ENCODE measurements at regions of chr6 and their contacts with region 1.

Region 1: DNA sequence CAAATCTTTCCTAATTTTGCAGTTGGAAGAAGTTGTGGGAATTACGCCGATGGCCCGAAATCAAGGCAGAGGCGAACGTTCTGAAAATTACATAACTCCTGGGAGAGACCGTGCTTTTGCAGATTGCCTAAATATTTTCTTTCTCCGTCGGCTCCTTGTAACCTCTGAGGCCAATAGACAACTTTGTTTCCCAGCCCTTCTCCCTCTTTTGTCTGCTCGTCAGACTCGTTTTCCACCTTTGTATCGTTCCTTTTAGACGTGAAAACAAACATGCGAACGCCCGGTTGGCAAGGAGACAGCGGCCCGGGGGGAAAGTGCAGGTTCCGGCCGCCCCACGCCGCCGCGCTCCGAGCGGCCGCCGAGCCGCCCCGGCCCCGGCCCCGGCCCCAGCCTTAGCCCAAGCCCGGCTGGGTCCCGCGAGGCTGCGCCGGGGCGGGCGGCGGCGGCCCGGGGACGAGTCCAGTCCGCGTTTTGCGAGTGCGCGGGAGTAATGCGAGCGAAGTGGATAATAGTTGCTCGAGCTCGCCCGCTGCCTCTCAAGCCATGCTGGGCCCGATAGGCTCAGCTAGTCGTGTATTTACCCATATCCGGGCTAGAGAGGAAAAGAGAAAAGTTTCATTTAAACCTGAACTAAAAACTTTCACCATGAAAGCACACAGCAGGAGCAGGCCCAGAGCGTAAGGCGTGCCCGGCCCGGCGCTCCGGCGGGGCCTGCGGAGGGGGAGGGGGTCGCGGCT is at the start of gene ARID1B:
- DNase-seq: peak; percentile 67 to 86 (median 80)
- ATAC-seq: peak; percentile 74
- H3K4me3 ChIP-seq: peak within 1 kb of the TSS; percentile 79
- H3K4me3 Mint-ChIP-seq: peak within 1 kb of the TSS; percentile 87 to 100 (median 96)
- H3K27ac ChIP-seq: peak within 1 kb of the TSS; percentile 81
- H3K27ac Mint-ChIP-seq: peak within 1 kb of the TSS; percentile 94 to 99 (median 99)
- H3K4me1 ChIP-seq: peaks cover 4 to 10% of the 10 kb centered on the region in 2 donors
- H3K4me1 Mint-ChIP-seq: peaks cover 11 to 44% (median 38%) of the 10 kb centered on the region in 7 donors
- H3K27me3 ChIP-seq: no peaks in the 10 kb centered on the region
- H3K27me3 Mint-ChIP-seq: peaks cover 0 to 4% (median 0%) of the 10 kb centered on the region in 5 donors
- total RNA-seq, gene ARID1B: 88.8 to 164 (median 141) TPM

Region 2: DNA sequence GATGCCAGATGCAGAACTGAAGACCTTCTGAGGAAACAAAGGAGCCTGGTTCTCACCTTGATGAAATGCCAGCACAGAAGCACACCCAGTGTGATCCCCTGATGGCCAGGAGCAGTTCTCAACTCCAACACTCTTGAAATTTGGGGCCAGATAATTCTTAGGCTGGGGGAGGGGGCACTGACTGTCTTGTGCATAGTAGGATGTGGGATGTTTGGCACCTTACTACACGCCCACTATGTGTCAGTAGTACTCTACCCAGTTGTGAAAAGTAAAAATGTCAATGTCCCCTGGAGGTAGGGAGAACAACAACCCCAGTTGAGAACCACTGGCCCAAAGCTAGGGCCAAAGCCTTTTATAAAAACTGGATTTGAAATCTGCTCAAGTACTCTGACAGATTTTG is 398.2 kb before region 1 on chr6:
- CTCF ChIA-PET with region 1: no interaction called
- POLR2A ChIA-PET with region 1: no interaction called
- intact Hi-C with region 1: loop called in 1 of 2 experiments (anchors 5 kb)
- DNase-seq: peak in 6 of 9 donors; percentile 19 to 48 (median 36)
- ATAC-seq: peak; percentile 74
- H3K4me3 ChIP-seq: no peak overlapping the region
- H3K4me3 Mint-ChIP-seq: no peak overlapping the region
- H3K27ac ChIP-seq: no peak overlapping the region
- H3K27ac Mint-ChIP-seq: peak overlapping the region in 6 of 9 donors; percentile 8 to 67 (median 36)
- H3K4me1 ChIP-seq: no peaks in the 10 kb centered on the region
- H3K4me1 Mint-ChIP-seq: peaks cover 0 to 21% (median 0%) of the 10 kb centered on the region in 7 donors
- H3K27me3 ChIP-seq: no peaks in the 10 kb centered on the region
- H3K27me3 Mint-ChIP-seq: peaks cover 0 to 4% (median 0%) of the 10 kb centered on the region in 5 donors

Region 3: GRCh38 chr6:156533872-156534524 is 243.0 kb before region 1 on chr6:
- CTCF ChIA-PET with region 1: no interaction called
- POLR2A ChIA-PET with region 1: no interaction called
- intact Hi-C with region 1: no loop called
- DNase-seq: no peak
- ATAC-seq: no peak
- H3K4me3 ChIP-seq: no peak overlapping the region
- H3K4me3 Mint-ChIP-seq: no peak overlapping the region
- H3K27ac ChIP-seq: no peak overlapping the region
- H3K27ac Mint-ChIP-seq: peak overlapping the region in 1 of 9 donors; percentile 35
- H3K4me1 ChIP-seq: no peaks in the 10 kb centered on the region
- H3K4me1 Mint-ChIP-seq: no peaks in the 10 kb centered on the region
- H3K27me3 ChIP-seq: no peaks in the 10 kb centered on the region
- H3K27me3 Mint-ChIP-seq: no peaks in the 10 kb centered on the region

Region 4: DNA sequence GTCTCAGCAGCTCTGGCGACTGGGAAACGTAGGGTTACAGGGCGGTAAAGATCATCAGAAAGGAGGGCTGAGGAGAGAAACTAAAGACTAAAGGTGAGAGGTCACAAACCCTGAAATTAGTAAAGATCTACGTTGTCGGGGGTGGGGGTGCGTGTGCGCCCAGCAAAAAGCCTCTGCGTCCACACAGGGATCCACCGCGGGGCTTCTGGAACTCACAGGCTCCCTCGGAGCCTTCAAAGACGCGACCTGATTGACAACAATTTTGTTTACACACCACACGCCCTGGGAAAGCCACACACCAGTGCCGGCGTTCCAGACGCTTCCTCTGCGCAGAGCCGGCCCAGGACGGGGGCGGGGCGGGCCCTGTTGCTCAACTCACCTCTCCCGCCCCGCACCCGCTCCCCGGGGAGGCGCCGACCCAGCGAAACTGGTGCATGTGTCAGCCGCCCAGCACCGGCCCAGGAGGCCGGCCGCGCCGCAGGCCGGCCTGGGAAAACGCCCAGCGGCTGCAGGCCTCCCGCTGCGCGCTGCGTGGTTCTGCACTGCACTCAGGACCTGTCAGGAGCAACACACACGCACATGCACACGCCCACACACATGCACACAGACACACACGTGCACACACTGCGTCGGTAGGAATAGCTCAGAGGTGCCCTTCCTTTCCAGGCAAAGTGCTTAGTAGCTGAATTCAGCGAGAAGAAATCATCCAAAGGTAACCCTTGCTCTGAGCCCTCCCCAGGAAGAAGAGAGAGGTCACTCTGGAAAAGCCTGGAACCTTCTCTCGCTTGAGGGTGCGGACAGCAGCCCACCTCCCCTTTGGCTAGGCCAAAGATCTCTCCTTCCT is 57.1 kb before region 1 on chr6:
- CTCF ChIA-PET with region 1: interaction called, 5 read pairs
- POLR2A ChIA-PET with region 1: interaction called, 17 read pairs
- intact Hi-C with region 1: loop called (anchors 1 kb)
- DNase-seq: peak; percentile 56 to 83 (median 76)
- ATAC-seq: peak; percentile 95
- H3K4me3 ChIP-seq: peak overlapping the region; percentile 76
- H3K4me3 Mint-ChIP-seq: peak overlapping the region; percentile 83 to 93 (median 90)
- H3K27ac ChIP-seq: peak overlapping the region; percentile 70
- H3K27ac Mint-ChIP-seq: peak overlapping the region; percentile 38 to 98 (median 93)
- H3K4me1 ChIP-seq: peaks cover 6 to 15% of the 10 kb centered on the region in 2 donors
- H3K4me1 Mint-ChIP-seq: peaks cover 7 to 22% (median 16%) of the 10 kb centered on the region in 7 donors
- H3K27me3 ChIP-seq: no peaks in the 10 kb centered on the region
- H3K27me3 Mint-ChIP-seq: peaks cover 0 to 7% (median 0%) of the 10 kb centered on the region in 5 donors

Region 5: DNA sequence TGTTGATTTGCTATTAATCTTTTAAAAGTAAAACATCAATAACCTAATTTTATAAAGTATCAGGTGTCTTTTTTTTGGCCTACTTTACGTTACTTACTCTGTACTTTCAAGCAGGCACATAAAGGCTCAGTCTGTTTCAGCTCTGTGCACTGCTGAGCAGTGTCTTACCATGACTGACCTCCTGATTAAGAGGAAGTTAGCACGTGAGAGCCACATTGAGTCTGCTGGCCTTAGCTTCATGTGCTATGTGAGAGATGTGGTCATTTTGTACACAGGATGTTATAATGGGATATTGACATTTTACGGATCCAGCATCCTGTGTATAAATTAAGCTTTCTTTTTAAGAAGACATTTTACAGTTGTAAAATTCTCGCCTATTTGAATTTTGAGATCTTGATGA is 32.0 kb after region 1 on chr6:
- CTCF ChIA-PET with region 1: no interaction called
- POLR2A ChIA-PET with region 1: no interaction called
- intact Hi-C with region 1: no loop called
- DNase-seq: no peak
- ATAC-seq: peak; percentile 77
- H3K4me3 ChIP-seq: no peak overlapping the region
- H3K4me3 Mint-ChIP-seq: peak overlapping the region in 6 of 10 donors; percentile 6 to 58 (median 30)
- H3K27ac ChIP-seq: no peak overlapping the region
- H3K27ac Mint-ChIP-seq: peak overlapping the region in 3 of 9 donors; percentile 6 to 60 (median 52)
- H3K4me1 ChIP-seq: peaks cover under 1 to 30% of the 10 kb centered on the region in 2 donors
- H3K4me1 Mint-ChIP-seq: peaks cover 38 to 95% (median 90%) of the 10 kb centered on the region in 7 donors
- H3K27me3 ChIP-seq: no peaks in the 10 kb centered on the region
- H3K27me3 Mint-ChIP-seq: no peaks in the 10 kb centered on the region

Region 6: DNA sequence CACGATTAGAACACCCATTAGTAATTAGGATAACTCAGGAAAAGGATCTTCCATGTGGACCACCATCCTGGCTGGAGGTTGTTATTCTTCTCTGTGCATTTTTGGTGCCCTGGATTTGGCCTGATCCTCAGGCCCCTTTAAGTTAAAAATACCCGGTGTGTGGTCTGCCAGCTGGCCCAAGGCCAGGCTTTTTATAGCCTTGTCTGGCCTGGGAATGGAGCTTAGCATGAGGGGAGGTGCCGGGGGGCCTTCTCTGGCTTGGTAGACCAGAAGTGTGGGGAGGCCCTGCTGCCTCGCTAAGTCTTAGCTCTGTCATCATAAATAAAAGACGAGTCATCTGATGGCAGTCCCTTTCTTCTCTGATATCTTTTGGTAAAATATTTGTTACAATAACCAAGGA is 71.5 kb after region 1 on chr6:
- CTCF ChIA-PET with region 1: no interaction called
- POLR2A ChIA-PET with region 1: no interaction called
- intact Hi-C with region 1: no loop called
- DNase-seq: no peak
- ATAC-seq: no peak
- H3K4me3 ChIP-seq: no peak overlapping the region
- H3K4me3 Mint-ChIP-seq: peak overlapping the region in 2 of 10 donors; percentile 12 to 68
- H3K27ac ChIP-seq: no peak overlapping the region
- H3K27ac Mint-ChIP-seq: peak overlapping the region in 6 of 9 donors; percentile 18 to 76 (median 34)
- H3K4me1 ChIP-seq: peaks cover 27 to 51% of the 10 kb centered on the region in 2 donors
- H3K4me1 Mint-ChIP-seq: peaks cover 63 to 100% (median 97%) of the 10 kb centered on the region in 7 donors
- H3K27me3 ChIP-seq: no peaks in the 10 kb centered on the region
- H3K27me3 Mint-ChIP-seq: no peaks in the 10 kb centered on the region

Region 7: GRCh38 chr6:156866220-156867015 is 89.4 kb after region 1 on chr6:
- CTCF ChIA-PET with region 1: no interaction called
- POLR2A ChIA-PET with region 1: interaction called, 4 read pairs
- intact Hi-C with region 1: loop called in 1 of 2 experiments (anchors 5 kb)
- DNase-seq: no peak
- ATAC-seq: no peak
- H3K4me3 ChIP-seq: no peak overlapping the region
- H3K4me3 Mint-ChIP-seq: peak overlapping the region in 7 of 10 donors; percentile 8 to 56 (median 26)
- H3K27ac ChIP-seq: no peak overlapping the region
- H3K27ac Mint-ChIP-seq: peak overlapping the region in 8 of 9 donors; percentile 15 to 79 (median 54)
- H3K4me1 ChIP-seq: peaks cover 0 to 5% of the 10 kb centered on the region in 2 donors
- H3K4me1 Mint-ChIP-seq: peaks cover 39 to 97% (median 90%) of the 10 kb centered on the region in 7 donors
- H3K27me3 ChIP-seq: no peaks in the 10 kb centered on the region
- H3K27me3 Mint-ChIP-seq: no peaks in the 10 kb centered on the region

Region 8: GRCh38 chr6:157221007-157221816 is 444.2 kb after region 1 on chr6:
- CTCF ChIA-PET with region 1: no interaction called
- POLR2A ChIA-PET with region 1: no interaction called
- intact Hi-C with region 1: loop called (anchors 5 kb)
- DNase-seq: peak; percentile 71 to 85 (median 82)
- ATAC-seq: peak; percentile 85
- H3K4me3 ChIP-seq: peak overlapping the region; percentile 65
- H3K4me3 Mint-ChIP-seq: peak overlapping the region; percentile 78 to 97 (median 86)
- H3K27ac ChIP-seq: peak overlapping the region; percentile 49
- H3K27ac Mint-ChIP-seq: peak overlapping the region; percentile 48 to 99 (median 85)
- H3K4me1 ChIP-seq: peaks cover 0 to 28% of the 10 kb centered on the region in 2 donors
- H3K4me1 Mint-ChIP-seq: peaks cover 31 to 55% (median 39%) of the 10 kb centered on the region in 7 donors
- H3K27me3 ChIP-seq: no peaks in the 10 kb centered on the region
- H3K27me3 Mint-ChIP-seq: peaks cover 0 to 8% (median 2%) of the 10 kb centered on the region in 5 donors